ENCODE measurements at regions of chr9 and their contacts with region 1.

Region 1: GRCh38 chr9:122350638-122351355 is 20.0 kb upstream of the PTGS1 start:
- DNase-seq: peak; percentile 77
- H3K4me3 ChIP-seq: no peak overlapping the region
- H3K27ac ChIP-seq: no peak overlapping the region
- H3K4me1 ChIP-seq: peaks cover 23% of the 10 kb centered on the region
- H3K27me3 ChIP-seq: no peaks in the 10 kb centered on the region
- CTCF ChIP-seq: peak; percentile 92 to 94
- POLR2A ChIP-seq: no peak

Region 2: GRCh38 chr9:121510766-121511550 is 839.8 kb before region 1 on chr9:
- CTCF ChIA-PET with region 1: no interaction called
- POLR2A ChIA-PET with region 1: no interaction called
- dilution Hi-C with region 1: no loop called
- intact Hi-C with region 1: no loop called
- DNase-seq: no peak
- H3K4me3 ChIP-seq: no peak overlapping the region
- H3K27ac ChIP-seq: no peak overlapping the region
- H3K4me1 ChIP-seq: no peaks in the 10 kb centered on the region
- H3K27me3 ChIP-seq: peaks cover 3 to 4% of the 10 kb centered on the region in 2 experiments
- CTCF ChIP-seq: no peak
- POLR2A ChIP-seq: no peak

Region 3: GRCh38 chr9:122092611-122093506 is 257.9 kb before region 1 on chr9 and contains the start of gene TTLL11:
- CTCF ChIA-PET with region 1: interaction called, 254 read pairs
- POLR2A ChIA-PET with region 1: no interaction called
- dilution Hi-C with region 1: no loop called
- intact Hi-C with region 1: loop called (anchors 1 kb)
- DNase-seq: peak; percentile 93
- H3K4me3 ChIP-seq: peak within 1 kb of the TSS; percentile 74 to 82 (median 78)
- H3K27ac ChIP-seq: no peak within 1 kb of the TSS
- H3K4me1 ChIP-seq: peaks cover 11% of the 10 kb centered on the region
- H3K27me3 ChIP-seq: peaks cover 0 to 2% of the 10 kb centered on the region in 2 experiments
- CTCF ChIP-seq: no peak
- POLR2A ChIP-seq: peak; percentile 56
- total RNA-seq, gene TTLL11: 4.9 and 8.1 TPM in 2 replicates

Region 4: DNA sequence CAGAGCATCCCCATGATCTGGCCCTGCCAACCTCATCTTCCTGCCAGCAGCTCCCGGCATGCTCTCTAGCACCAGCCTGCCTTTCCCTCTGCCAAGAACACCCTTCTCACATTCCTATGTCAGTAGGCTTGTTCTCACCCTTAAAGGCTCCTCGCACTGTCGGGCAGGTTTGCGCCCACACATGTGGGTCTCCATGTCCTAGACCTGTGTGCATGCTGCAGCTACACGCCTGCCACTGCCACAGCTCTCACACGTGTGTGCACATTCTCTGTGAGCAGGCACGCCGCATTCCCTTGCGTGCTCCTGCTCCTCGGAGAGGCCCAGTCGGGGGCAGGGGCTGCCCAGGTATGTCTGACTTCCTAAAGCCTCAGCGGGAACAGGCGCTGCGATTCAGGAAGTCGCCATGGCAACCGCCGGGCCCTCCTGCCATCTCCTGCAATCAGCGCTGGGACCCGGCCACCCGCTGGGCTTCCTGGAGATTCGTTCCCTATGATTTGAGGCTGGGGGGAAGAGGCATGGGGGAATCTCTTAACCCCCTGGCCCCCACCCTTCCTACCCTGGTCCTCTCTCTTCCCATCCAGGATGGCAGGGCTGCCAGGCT is 219.3 kb before region 1 on chr9:
- CTCF ChIA-PET with region 1: interaction called, 576 read pairs
- POLR2A ChIA-PET with region 1: no interaction called
- dilution Hi-C with region 1: no loop called
- intact Hi-C with region 1: no loop called
- DNase-seq: no peak
- H3K4me3 ChIP-seq: no peak overlapping the region
- H3K27ac ChIP-seq: no peak overlapping the region
- H3K4me1 ChIP-seq: peaks cover 35% of the 10 kb centered on the region
- H3K27me3 ChIP-seq: no peaks in the 10 kb centered on the region
- CTCF ChIP-seq: no peak
- POLR2A ChIP-seq: no peak

Region 5: GRCh38 chr9:122159026-122159924 is 191.5 kb before region 1 on chr9 and contains the starts of genes MORN5 and NDUFA8:
- CTCF ChIA-PET with region 1: interaction called, 15 read pairs
- POLR2A ChIA-PET with region 1: no interaction called
- dilution Hi-C with region 1: no loop called
- intact Hi-C with region 1: loop called (anchors 1 kb)
- DNase-seq: peak; percentile 97
- H3K4me3 ChIP-seq: peak within 1 kb of the TSS; percentile 56 to 100 (median 87)
- H3K27ac ChIP-seq: peak within 1 kb of the TSS; percentile 0
- H3K4me1 ChIP-seq: peaks cover 8% of the 10 kb centered on the region
- H3K27me3 ChIP-seq: peaks cover 8 to 16% of the 10 kb centered on the region in 2 experiments
- CTCF ChIP-seq: no peak
- POLR2A ChIP-seq: peak; percentile 90
- total RNA-seq, gene MORN5: not detected in 2 replicates
- total RNA-seq, gene NDUFA8: 65.5 and 68.2 TPM in 2 replicates

Region 6: GRCh38 chr9:122248448-122248915 is 102.3 kb before region 1 on chr9:
- CTCF ChIA-PET with region 1: interaction called, 7 read pairs
- POLR2A ChIA-PET with region 1: no interaction called
- dilution Hi-C with region 1: no loop called
- intact Hi-C with region 1: loop called (anchors 1 kb)
- DNase-seq: peak; percentile 78
- H3K4me3 ChIP-seq: no peak overlapping the region
- H3K27ac ChIP-seq: peak overlapping the region; percentile 75
- H3K4me1 ChIP-seq: peaks cover 34% of the 10 kb centered on the region
- H3K27me3 ChIP-seq: no peaks in the 10 kb centered on the region
- CTCF ChIP-seq: no peak
- POLR2A ChIP-seq: no peak

Region 7: GRCh38 chr9:122307925-122308324 is 42.9 kb before region 1 on chr9:
- CTCF ChIA-PET with region 1: interaction called, 25 read pairs
- POLR2A ChIA-PET with region 1: no interaction called
- dilution Hi-C with region 1: no loop called
- intact Hi-C with region 1: loop called (anchors 1 kb)
- DNase-seq: peak; percentile 92
- H3K4me3 ChIP-seq: no peak overlapping the region
- H3K27ac ChIP-seq: peak overlapping the region; percentile 84
- H3K4me1 ChIP-seq: peaks cover 53% of the 10 kb centered on the region
- H3K27me3 ChIP-seq: no peaks in the 10 kb centered on the region
- CTCF ChIP-seq: no peak
- POLR2A ChIP-seq: no peak

Region 8: GRCh38 chr9:122445155-122445749 is 94.5 kb after region 1 on chr9:
- CTCF ChIA-PET with region 1: interaction called, 24 read pairs
- POLR2A ChIA-PET with region 1: no interaction called
- dilution Hi-C with region 1: no loop called
- intact Hi-C with region 1: no loop called
- DNase-seq: peak; percentile 84
- H3K4me3 ChIP-seq: no peak overlapping the region
- H3K27ac ChIP-seq: peak overlapping the region; percentile 57
- H3K4me1 ChIP-seq: peaks cover 14% of the 10 kb centered on the region
- H3K27me3 ChIP-seq: no peaks in the 10 kb centered on the region
- CTCF ChIP-seq: no peak
- POLR2A ChIP-seq: no peak

Region 9: DNA sequence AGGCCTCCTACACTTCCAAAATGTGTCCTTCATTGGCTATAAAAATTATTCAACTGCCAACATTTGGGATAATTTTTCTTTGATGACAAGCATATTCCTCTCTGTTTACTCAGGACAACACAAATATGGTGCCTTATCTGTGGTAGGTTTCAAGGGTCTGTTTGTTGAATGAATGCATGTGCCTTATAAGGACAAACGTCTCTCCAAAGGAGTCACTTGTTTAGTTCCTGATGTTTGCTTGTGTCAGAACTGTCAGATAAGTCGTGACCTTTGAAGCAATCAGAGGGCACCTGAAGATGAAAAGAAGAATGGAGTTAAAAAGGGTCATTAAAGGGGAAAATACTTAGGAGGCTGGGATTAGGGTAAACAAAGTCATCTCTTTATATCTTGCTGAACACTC is 156.2 kb after region 1 on chr9:
- CTCF ChIA-PET with region 1: no interaction called
- POLR2A ChIA-PET with region 1: no interaction called
- dilution Hi-C with region 1: no loop called
- intact Hi-C with region 1: no loop called
- DNase-seq: no peak
- H3K4me3 ChIP-seq: no peak overlapping the region
- H3K27ac ChIP-seq: no peak overlapping the region
- H3K4me1 ChIP-seq: no peaks in the 10 kb centered on the region
- H3K27me3 ChIP-seq: peaks cover 8 to 14% of the 10 kb centered on the region in 2 experiments
- CTCF ChIP-seq: no peak
- POLR2A ChIP-seq: no peak

Region 10: DNA sequence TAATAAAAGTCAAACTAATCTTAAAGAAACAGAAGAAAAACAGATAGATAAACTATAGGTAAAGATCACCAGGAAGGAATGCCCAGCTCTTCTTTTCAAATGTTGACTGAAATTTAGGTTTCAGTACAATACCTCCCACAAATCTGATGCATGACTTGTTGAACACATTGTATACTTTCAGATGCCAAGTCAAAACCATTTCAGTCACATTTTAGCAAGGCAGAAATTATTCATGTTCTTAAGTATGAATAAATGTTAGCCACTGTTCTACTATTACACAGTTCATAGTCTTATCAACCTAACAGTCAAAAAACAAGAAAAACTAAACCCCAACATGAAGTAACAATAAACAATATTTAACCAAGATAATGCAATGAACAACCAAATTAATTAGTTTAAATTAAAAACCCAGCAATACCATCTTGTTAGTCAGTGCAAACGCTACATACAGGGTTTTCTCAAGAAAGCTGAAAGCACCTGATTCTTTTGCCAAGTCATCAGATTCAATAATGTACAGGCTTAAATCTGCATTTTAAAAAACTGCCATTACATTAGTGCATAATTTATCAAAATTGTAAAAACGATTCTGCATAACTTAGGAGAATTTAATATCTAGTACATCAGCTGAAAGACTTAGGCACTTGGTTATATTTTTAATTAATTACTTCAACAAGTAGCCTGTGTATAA is 497.6 kb after region 1 on chr9:
- CTCF ChIA-PET with region 1: no interaction called
- POLR2A ChIA-PET with region 1: no interaction called
- dilution Hi-C with region 1: no loop called
- intact Hi-C with region 1: no loop called
- DNase-seq: no peak
- H3K4me3 ChIP-seq: no peak overlapping the region
- H3K27ac ChIP-seq: no peak overlapping the region
- H3K4me1 ChIP-seq: no peaks in the 10 kb centered on the region
- H3K27me3 ChIP-seq: no peaks in the 10 kb centered on the region
- CTCF ChIP-seq: no peak
- POLR2A ChIP-seq: no peak

Region 11: DNA sequence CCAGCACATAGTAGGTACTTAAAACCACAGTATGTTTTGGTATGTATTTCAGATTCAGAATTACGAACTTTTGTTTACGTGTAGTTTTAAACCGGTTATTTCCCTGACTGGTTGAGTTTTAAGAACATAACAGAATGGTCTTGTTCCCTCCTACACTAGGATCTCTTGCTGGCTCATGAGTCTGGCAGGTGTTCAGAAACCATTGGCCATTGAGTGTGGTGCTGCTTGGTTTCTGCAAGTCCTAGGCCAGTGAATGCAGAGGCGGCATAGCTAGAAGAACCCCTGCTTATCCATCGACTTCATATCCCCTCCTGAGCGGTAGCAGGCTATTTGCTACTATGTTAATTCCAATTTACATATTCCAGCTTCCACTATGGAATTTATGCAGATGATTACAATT is 748.2 kb after region 1 on chr9:
- CTCF ChIA-PET with region 1: no interaction called
- POLR2A ChIA-PET with region 1: no interaction called
- dilution Hi-C with region 1: no loop called
- intact Hi-C with region 1: no loop called
- DNase-seq: no peak
- H3K4me3 ChIP-seq: no peak overlapping the region
- H3K27ac ChIP-seq: no peak overlapping the region
- H3K4me1 ChIP-seq: no peaks in the 10 kb centered on the region
- H3K27me3 ChIP-seq: no peaks in the 10 kb centered on the region
- CTCF ChIP-seq: no peak
- POLR2A ChIP-seq: no peak